A549 (cell line): ENCODE measurements at regions of chr16 and their contacts with region 1.

Region 1: DNA sequence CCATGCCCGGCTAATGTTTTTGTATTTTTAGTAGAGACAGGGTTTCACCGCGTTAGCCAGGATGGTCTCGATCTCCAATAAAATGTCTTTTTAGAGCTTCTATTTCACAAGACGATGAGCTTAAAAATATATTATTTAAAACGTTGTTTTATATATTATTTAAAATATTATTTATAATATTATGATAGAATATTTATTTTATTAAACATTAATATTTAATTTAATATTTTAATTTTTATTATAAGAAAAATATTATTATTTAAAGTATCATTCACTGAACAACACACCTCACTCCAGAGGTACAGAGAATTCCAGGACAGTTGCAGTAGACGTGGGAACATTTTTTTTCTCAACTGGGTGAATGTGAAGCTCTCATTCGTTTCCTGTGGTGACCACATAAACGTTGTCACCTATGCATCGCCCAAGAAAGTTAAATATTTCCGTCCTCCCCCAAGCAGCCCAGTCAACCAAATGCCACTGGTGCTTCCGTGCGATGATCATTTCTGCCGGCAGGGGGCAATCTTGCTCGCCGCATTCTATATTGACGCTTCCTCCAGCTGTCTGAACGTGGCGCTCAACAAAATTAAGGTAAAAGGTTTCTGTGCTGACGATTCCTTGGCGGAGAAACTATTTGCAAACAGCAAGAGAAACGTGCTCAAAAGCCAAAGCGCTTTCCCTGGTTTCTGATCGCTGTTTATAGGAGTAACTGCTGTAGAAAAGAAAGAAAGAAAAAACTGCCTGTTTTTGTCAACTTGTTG is 41.7 kb upstream of the PRSS54 start:
- DNase-seq: peak; percentile 77 to 80
- ATAC-seq: peak; percentile 85 to 90
- H3K4me3 ChIP-seq: 0 out of 3 replicates have a peak overlapping the region, but pooled peaks have one; percentile 21
- H3K27ac ChIP-seq: 0 out of 6 replicates have a peak overlapping the region, but pooled peaks of 1 of the 2 experiments have one; percentile 27
- H3K4me1 ChIP-seq: peaks cover 3% of the 10 kb centered on the region; the same call in 1 of the 3 replicates
- CTCF ChIP-seq: peak; percentile 97
- EP300 ChIP-seq: no peak
- POLR2A ChIP-seq: no peak
- RAD21 ChIP-seq: peak; percentile 94

Region 2: GRCh38 chr16:58290861-58291260 is 45.6 kb before region 1 on chr16:
- CTCF ChIA-PET with region 1: no interaction called
- POLR2A ChIA-PET with region 1: no interaction called
- DNase-seq: no peak
- ATAC-seq: no peak
- H3K4me3 ChIP-seq: no peak overlapping the region
- H3K27ac ChIP-seq: no peak overlapping the region
- H3K4me1 ChIP-seq: no peaks in the 10 kb centered on the region
- CTCF ChIP-seq: no peak
- EP300 ChIP-seq: no peak
- POLR2A ChIP-seq: no peak
- RAD21 ChIP-seq: no peak

Region 3: DNA sequence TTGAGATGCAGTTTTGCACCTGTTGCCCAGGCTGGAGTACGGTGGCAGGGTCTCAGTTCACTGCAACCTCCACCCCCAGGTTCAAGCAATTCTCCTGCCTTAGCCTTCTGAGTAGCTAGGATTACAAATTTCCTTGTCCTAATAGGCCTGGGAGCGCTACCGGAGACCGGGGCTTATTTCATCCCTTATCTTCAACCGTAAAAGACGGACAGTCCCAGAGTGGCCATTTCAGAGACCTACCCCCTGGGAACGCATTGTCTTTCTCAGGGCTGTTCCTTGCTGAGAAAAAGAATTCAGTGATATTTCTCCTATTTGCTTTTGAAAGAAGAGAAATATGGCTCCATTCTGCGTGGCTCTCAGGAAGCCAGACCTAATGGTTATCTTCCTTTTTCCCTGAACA is 16.2 kb after region 1 on chr16:
- CTCF ChIA-PET with region 1: interaction called, 49 read pairs
- POLR2A ChIA-PET with region 1: no interaction called
- DNase-seq: no peak
- ATAC-seq: no peak
- H3K4me3 ChIP-seq: no peak overlapping the region
- H3K27ac ChIP-seq: no peak overlapping the region
- H3K4me1 ChIP-seq: no peaks in the 10 kb centered on the region
- CTCF ChIP-seq: no peak
- EP300 ChIP-seq: no peak
- POLR2A ChIP-seq: no peak
- RAD21 ChIP-seq: no peak

Region 4: GRCh38 chr16:58451945-58452401 is 115.5 kb after region 1 on chr16:
- CTCF ChIA-PET with region 1: interaction called, 11 read pairs
- POLR2A ChIA-PET with region 1: no interaction called
- DNase-seq: peak; percentile 32 to 90
- ATAC-seq: peak; percentile 88 to 90
- H3K4me3 ChIP-seq: no peak overlapping the region
- H3K27ac ChIP-seq: peak overlapping the region; percentile 61 to 79
- H3K4me1 ChIP-seq: peaks cover 45% of the 10 kb centered on the region
- CTCF ChIP-seq: peak; percentile 33; the same call in 2 of the 3 replicates
- EP300 ChIP-seq: no peak
- POLR2A ChIP-seq: no peak
- RAD21 ChIP-seq: peak; percentile 32 to 33; a peak in 3 of 5 replicates

Region 5: GRCh38 chr16:58471321-58471975 is 134.9 kb after region 1 on chr16:
- CTCF ChIA-PET with region 1: interaction called, 33 read pairs
- POLR2A ChIA-PET with region 1: no interaction called
- DNase-seq: no peak
- ATAC-seq: no peak; a peak in 1 of 6 replicates
- H3K4me3 ChIP-seq: no peak overlapping the region
- H3K27ac ChIP-seq: no peak overlapping the region
- H3K4me1 ChIP-seq: no peaks in the 10 kb centered on the region
- CTCF ChIP-seq: no peak
- EP300 ChIP-seq: no peak
- POLR2A ChIP-seq: no peak
- RAD21 ChIP-seq: no peak

Region 6: DNA sequence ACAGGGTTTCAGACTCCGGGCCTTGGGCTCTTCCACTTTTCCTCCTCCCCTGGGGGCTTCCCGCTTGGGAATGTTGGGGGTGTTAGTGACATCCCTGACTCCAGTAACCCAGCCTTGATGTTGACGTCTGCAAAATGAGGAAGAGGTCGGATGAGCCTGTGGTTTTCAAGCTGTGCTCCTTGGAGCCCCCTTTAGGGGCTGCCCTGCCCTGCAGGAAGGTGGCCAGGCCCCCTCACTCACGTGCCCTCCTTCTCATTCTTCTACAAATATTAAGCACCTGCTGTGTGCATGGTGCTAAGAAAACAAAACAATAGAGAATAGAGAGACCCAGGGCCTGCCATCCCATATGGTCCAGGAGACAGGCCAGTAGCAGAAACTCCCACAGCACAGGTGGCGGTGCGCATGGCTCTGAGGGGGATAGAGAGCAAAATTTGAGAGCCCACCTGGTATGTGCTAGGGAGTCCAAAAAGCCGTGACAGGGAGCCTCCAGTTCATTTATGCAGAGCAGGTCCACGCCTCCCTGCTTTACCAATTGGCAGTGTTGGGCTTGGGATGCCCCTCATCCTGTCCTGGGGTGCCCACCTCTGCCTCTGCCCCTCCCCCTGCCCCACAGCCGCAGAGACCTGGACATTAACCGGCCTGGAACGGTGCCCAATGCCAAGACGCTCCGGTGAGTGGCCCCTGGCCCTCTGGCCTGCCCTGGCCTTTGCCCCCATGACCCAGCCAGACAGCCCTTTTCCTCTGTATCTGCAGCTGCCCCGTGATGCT is 170.9 kb after region 1 on chr16:
- CTCF ChIA-PET with region 1: interaction called, 721 read pairs
- POLR2A ChIA-PET with region 1: no interaction called
- DNase-seq: no peak
- ATAC-seq: no peak
- H3K4me3 ChIP-seq: no peak overlapping the region
- H3K27ac ChIP-seq: no peak overlapping the region
- H3K4me1 ChIP-seq: no peaks in the 10 kb centered on the region
- CTCF ChIP-seq: no peak
- EP300 ChIP-seq: no peak
- POLR2A ChIP-seq: no peak
- RAD21 ChIP-seq: no peak